IMR-90 (cell line): ENCODE measurements at regions of chr16 and their contacts with region 1.

Region 1: DNA sequence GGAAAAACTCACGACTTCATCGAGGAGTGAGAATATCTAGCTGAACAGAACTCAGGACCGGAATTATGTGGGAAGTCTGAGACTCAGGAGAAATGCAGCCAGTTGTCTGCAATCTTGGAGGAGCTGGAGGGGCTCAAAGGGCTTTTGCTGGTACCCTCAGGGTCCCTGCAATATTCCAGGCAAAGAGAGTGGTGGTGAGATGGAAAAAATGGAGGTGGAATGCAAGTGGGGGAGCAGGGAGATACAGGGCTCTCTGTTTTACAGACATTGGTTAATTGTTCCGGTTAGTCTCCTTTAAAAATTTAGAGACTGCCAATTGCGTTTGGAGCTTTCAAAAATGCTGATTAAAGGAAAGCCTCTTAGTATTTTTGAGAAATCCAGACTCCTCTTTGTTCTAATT is 18.2 kb upstream of the HP start:
- DNase-seq: no peak
- ATAC-seq: no peak
- H3K4me3 ChIP-seq: no peak overlapping the region
- H3K27ac ChIP-seq: no peak overlapping the region
- H3K4me1 ChIP-seq: no peaks in the 10 kb centered on the region
- H3K27me3 ChIP-seq: no peaks in the 10 kb centered on the region; the same call in 1 of the 2 replicates
- CTCF ChIP-seq: no peak
- POLR2A ChIP-seq: no peak
- RAD21 ChIP-seq: no peak

Region 2: DNA sequence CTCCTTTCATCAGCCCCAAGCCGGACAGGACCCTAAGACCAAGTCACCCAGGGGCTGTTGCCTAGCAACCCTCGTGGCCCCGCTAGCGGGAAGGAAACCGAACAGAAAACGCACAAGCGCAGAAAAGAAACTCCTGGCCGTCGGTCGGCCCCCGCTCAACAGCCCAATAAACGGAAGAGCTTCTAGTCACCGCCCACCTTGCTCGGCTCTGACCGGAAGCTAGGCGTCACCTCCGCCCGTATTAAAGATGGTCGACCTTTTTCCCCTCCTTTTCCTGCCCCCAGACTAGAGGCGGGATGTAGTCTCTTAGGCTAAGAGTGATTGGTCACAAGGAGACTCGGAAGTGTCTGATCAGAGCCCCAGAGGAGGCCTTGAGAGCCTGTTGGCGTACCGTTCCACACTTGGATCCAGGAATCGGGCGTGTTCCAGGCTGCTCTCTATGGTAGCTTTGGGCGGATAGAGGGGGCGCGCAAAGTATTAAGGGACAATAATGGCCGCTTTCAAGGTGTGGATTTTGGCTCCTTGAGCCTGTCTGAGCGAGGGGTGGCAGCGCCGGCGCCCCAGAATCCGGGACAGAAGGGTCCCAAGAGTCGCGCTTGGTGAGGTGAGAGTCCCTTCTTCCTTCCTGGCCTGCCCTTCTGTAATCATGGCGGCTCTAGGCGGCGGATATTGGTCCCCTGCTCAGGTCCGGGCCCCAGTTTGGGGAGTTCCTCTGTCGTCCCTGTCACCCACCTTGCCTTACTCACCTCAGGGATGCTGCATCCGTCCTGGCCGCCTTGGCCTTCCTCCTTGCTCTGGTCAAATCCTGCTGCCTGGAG is 57.6 kb after region 1 on chr16 and contains the starts of genes DHX38 and TXNL4B:
- CTCF ChIA-PET with region 1: no interaction called
- POLR2A ChIA-PET with region 1: no interaction called
- dilution Hi-C with region 1: no loop called
- in situ Hi-C with region 1: no loop called
- intact Hi-C with region 1: loop called (anchors 10 kb)
- DNase-seq: peak; percentile 99
- ATAC-seq: peak; percentile 98
- H3K4me3 ChIP-seq: peak within 1 kb of the TSS; percentile 96
- H3K27ac ChIP-seq: peak within 1 kb of the TSS; percentile 80
- H3K4me1 ChIP-seq: 0 out of 2 replicates have a peak, but pooled peaks cover 2% of the 10 kb centered on the region
- H3K27me3 ChIP-seq: no peaks in the 10 kb centered on the region
- CTCF ChIP-seq: no peak
- POLR2A ChIP-seq: peak; percentile 96
- RAD21 ChIP-seq: no peak
- total RNA-seq, gene DHX38: 49.6 and 61.9 TPM in 2 replicates
- total RNA-seq, gene TXNL4B: 5.4 and 6.1 TPM in 2 replicates

Region 3: DNA sequence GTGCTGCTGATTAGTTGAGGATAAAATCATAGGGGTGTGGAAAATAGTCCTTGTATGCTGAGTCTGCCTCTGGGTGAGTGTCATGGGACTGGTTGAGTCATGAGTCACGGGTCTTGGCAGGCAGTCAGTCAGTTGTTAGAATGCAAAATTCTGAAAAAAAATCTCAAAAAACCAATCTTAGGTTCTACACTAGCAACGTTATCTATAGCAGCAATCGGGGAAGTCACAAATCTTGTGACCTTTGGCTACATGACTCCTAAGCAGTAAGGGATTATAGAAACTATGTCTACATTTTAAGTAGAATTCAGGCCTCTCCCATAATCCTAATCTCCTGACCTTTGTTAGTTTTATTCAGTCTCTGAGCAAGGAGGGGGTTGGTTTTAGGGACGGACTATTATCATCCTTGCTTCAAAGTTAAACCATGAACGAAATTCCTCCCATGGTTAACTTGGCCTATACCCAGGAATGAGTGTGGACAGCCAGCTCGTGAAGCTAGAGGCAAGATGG is 153.8 kb after region 1 on chr16:
- CTCF ChIA-PET with region 1: no interaction called
- POLR2A ChIA-PET with region 1: no interaction called
- dilution Hi-C with region 1: no loop called
- in situ Hi-C with region 1: no loop called
- intact Hi-C with region 1: no loop called
- DNase-seq: peak; percentile 51
- ATAC-seq: peak; percentile 53
- H3K4me3 ChIP-seq: no peak overlapping the region
- H3K27ac ChIP-seq: no peak overlapping the region
- H3K4me1 ChIP-seq: no peaks in the 10 kb centered on the region
- H3K27me3 ChIP-seq: no peaks in the 10 kb centered on the region
- CTCF ChIP-seq: no peak
- POLR2A ChIP-seq: no peak
- RAD21 ChIP-seq: no peak

Region 4: DNA sequence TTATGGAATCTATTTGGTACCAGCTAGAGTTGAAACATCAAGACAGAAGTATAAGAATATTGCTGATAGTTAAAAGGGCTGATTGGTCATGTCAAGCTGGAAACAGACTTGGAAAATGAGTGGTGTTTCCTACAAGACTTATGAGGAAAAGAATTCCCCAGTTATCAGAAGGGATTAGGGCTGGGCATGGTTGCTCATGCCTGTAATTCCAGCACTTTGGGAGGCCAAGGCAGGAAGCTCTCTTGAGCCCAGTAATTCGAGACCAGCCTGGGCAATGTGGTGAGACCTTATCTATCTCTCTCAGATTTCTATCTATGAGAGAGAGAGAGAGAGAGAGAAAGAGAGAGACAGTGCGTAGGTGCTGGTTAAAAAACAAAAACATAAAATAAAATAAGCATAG is 275.3 kb after region 1 on chr16:
- CTCF ChIA-PET with region 1: no interaction called
- POLR2A ChIA-PET with region 1: no interaction called
- dilution Hi-C with region 1: no loop called
- in situ Hi-C with region 1: no loop called
- intact Hi-C with region 1: no loop called
- DNase-seq: peak; percentile 13
- ATAC-seq: peak; percentile 69
- H3K4me3 ChIP-seq: no peak overlapping the region
- H3K27ac ChIP-seq: no peak overlapping the region
- H3K4me1 ChIP-seq: peaks cover 2% of the 10 kb centered on the region
- H3K27me3 ChIP-seq: no peaks in the 10 kb centered on the region
- CTCF ChIP-seq: no peak
- POLR2A ChIP-seq: no peak
- RAD21 ChIP-seq: no peak

Region 5: DNA sequence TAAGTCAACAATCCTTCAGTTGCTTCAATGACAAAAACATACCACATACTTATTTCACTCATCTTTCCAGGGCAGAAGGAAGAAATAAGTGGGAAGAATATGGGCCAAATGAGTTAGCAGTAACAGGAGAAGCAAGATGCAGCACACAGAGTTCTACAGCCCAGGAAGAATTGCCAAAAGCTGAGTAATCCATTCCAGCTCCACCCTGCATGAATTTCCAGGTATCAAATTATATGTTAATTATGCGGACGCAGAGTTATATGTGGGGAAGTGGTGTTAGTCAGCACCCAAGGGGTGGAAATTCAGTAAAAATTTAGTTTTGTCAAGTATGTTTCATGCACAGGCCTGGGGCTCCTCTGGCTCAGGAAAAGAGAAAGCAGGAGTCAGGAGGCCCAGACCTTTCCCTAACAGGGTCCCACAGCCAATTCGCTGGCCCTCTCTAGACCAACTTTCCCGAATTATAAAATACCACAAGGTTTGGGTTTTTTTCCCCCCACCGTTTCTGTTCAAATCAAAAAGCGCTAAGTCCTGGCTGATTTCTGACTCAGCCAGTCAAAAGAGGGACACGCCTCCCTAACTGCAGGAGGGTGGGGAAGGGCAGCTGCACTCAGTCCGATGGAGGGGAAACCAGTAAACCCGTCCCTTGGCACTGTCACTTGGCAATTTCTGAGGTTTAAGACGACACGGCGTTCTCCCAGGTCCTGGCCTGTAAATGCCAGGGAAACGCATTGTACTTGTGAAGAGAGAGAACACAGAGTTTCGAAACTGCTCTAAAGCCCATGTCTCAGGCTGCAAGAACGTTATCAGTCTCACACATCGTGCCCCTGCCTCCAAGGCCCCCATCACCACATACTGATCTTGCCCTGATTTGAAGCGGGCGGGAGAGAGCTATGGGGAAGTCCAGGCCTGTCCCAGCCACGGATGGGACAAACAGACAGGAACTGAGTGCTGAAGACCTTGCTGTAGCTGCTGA is 953.8 kb after region 1 on chr16:
- CTCF ChIA-PET with region 1: no interaction called
- POLR2A ChIA-PET with region 1: no interaction called
- dilution Hi-C with region 1: no loop called
- in situ Hi-C with region 1: no loop called
- intact Hi-C with region 1: no loop called
- DNase-seq: peak; percentile 93
- ATAC-seq: peak; percentile 83
- H3K4me3 ChIP-seq: peak overlapping the region; percentile 9; the same call in 1 of the 2 replicates
- H3K27ac ChIP-seq: peak overlapping the region; percentile 65
- H3K4me1 ChIP-seq: peaks cover 30% of the 10 kb centered on the region
- H3K27me3 ChIP-seq: no peaks in the 10 kb centered on the region
- CTCF ChIP-seq: no peak
- POLR2A ChIP-seq: no peak
- RAD21 ChIP-seq: 0 out of 2 replicates have a peak, but pooled peaks have one; percentile 6